Activated CD4-positive, alpha-beta T cell treated with anti-CD3 and anti-CD28 coated beads for 36 hours (primary cell): ENCODE measurements at regions of chr13 and their contacts with region 1.

Region 1: DNA sequence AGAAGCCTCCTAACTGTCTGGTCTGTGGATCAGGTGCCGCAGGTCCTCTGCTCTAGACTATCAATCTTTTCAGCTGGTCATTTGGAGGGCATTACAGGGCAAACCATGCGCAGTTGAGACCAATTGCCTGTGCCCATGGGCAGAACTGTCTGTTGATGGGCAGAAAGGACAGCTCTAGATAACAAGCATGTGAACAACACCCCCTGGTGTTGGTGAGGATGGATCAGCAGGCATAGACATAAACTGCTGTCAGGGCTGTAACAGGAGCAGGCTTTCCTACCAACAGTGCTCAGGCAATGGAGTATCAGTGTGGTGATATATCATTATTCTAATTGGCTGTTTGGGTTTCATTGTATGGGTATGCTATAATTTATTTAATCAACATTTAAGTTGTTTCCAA is 104.7 kb upstream of the KL start:
- DNase-seq: peak; percentile 46
- ATAC-seq: peak; percentile 91
- H3K4me3 Mint-ChIP-seq: no peak overlapping the region
- H3K27ac Mint-ChIP-seq: no peak overlapping the region
- H3K4me1 Mint-ChIP-seq: peaks cover 3% of the 10 kb centered on the region
- H3K27me3 Mint-ChIP-seq: peaks cover 9% of the 10 kb centered on the region

Region 2: DNA sequence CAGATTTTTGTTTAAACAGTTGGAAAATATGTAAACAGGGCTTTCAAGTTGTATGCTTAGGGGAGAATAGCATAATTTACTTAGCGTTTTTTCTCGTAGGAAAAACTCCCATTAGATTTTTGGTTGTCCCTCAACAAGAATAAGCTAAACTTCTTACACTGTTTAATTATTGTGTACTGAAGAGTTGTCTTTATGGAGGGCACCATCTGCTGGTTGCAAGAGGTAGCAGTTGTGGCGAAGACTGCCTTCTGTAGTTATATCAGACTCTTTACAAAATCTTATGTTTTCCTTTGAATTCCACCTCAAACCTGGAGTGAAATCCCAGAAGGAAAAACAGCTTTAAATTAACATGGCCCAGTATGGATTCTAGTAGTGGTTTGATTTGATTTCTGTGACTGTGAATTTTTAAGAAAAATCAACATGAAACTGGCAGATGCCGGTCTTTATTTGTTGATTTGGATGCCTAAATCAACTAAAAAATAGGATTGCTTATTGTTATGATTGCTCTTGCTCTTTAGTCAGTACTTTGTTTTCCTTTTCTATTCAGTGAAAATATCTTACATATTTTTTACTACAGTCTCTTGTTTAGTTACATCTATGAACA is 271.9 kb before region 1 on chr13:
- CTCF ChIA-PET with region 1: no interaction called
- POLR2A ChIA-PET with region 1: no interaction called
- intact Hi-C with region 1: loop called in 1 of 2 experiments (anchors 10 kb)
- DNase-seq: peak; percentile 66
- ATAC-seq: peak; percentile 69
- H3K4me3 Mint-ChIP-seq: no peak overlapping the region
- H3K27ac Mint-ChIP-seq: no peak overlapping the region
- H3K4me1 Mint-ChIP-seq: peaks cover 40% of the 10 kb centered on the region
- H3K27me3 Mint-ChIP-seq: no peaks in the 10 kb centered on the region